Activated CD4-positive, alpha-beta memory T cell treated with anti-CD3 and anti-CD28 coated beads for 36 hours (primary cell): ENCODE measurements at regions of chrX and their contacts with region 1.

Region 1: GRCh38 chrX:64205735-64206491 is 405 bp upstream of the AMER1 start:
- DNase-seq: peak; percentile 92
- H3K4me3 Mint-ChIP-seq: peak overlapping the region; percentile 81
- H3K27ac Mint-ChIP-seq: peak overlapping the region; percentile 91
- H3K4me1 Mint-ChIP-seq: peaks cover 7% of the 10 kb centered on the region
- H3K27me3 Mint-ChIP-seq: no peaks in the 10 kb centered on the region

Region 2: DNA sequence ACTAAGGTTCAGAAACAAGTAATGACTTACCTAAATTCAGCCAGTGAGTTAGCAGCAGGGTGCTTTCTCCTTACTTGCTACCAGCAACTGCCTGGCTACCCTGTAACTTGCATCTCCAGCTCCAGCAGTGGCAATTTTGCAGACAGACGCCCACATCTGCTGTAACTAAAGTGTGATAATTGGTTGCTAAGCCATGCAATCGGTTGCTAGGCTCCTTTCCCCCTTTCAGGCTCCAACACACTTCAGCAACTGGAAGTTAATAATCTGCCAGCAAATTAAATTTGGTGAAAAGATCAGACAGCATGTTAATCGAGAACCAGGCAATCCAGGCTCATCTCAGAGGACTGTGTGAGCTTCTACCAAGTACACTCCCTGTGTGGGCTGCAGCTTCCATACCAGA is 396.7 kb before region 1 on chrX:
- CTCF ChIA-PET with region 1: no interaction called
- POLR2A ChIA-PET with region 1: no interaction called
- intact Hi-C with region 1: no loop called
- DNase-seq: no peak
- H3K4me3 Mint-ChIP-seq: no peak overlapping the region
- H3K27ac Mint-ChIP-seq: no peak overlapping the region
- H3K4me1 Mint-ChIP-seq: no peaks in the 10 kb centered on the region
- H3K27me3 Mint-ChIP-seq: peaks cover 1% of the 10 kb centered on the region

Region 3: DNA sequence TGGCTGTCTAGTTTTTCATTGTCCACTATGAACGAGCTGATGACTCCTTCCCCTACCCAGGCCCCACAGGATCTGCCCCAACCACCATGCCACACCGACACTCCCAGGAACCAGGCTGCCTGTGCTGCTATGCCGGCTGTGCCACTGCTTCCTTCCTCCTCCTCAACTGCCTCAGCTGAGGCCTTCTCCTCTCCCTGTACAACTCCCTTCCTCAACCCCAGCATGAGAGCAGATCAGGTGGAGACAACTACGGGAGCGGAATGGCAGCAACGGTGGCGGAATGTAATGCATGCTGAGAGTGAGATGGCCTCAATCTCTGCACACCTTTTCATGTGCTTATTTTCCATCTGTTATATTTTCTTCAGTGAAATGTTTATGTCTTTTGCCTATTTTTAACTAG is 100.8 kb after region 1 on chrX:
- CTCF ChIA-PET with region 1: no interaction called
- POLR2A ChIA-PET with region 1: no interaction called
- intact Hi-C with region 1: no loop called
- DNase-seq: no peak
- H3K4me3 Mint-ChIP-seq: no peak overlapping the region
- H3K27ac Mint-ChIP-seq: no peak overlapping the region
- H3K4me1 Mint-ChIP-seq: no peaks in the 10 kb centered on the region
- H3K27me3 Mint-ChIP-seq: no peaks in the 10 kb centered on the region

Region 4: GRCh38 chrX:64394874-64395567 is 189.1 kb after region 1 on chrX and contains the start of gene MTMR8:
- CTCF ChIA-PET with region 1: no interaction called
- POLR2A ChIA-PET with region 1: no interaction called
- intact Hi-C with region 1: loop called (anchors 1 kb)
- DNase-seq: peak; percentile 86
- H3K4me3 Mint-ChIP-seq: peak within 1 kb of the TSS; percentile 90
- H3K27ac Mint-ChIP-seq: peak within 1 kb of the TSS; percentile 81
- H3K4me1 Mint-ChIP-seq: peaks cover 22% of the 10 kb centered on the region
- H3K27me3 Mint-ChIP-seq: no peaks in the 10 kb centered on the region
- total RNA-seq, gene MTMR8: 5.0 to 5.8 TPM

Region 5: DNA sequence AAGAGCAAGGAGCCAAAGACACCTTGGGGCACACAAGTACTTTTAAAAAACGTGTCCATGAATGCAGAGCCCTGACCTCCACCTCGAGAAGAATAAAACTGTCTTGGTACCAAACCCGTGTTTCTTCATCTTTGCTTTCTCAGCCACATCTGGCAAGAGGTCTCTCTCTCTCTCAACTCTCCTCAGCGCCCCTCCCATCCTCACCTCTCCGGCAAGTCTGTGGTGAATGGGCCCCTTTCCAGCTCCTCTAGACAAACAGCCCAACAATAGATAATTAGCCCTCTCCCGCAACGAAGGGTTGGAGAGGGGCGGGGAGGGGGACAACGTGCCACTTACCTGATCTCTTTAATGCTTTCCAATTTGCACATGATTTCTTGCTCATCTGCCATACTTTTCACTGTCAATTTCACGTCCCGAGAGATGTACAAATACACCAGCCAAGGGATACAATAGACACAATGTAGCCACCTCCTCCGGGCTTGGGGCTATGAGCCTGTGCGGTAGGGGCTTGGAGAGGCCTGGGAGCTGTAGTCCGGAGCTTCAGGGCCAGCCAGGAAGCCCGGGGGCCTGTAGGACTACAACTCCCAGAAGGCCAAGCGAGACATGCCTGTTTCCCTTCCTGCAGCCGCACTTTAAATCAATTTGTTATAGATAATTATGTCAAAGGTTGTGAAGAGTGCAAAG is 770.2 kb after region 1 on chrX and contains the start of gene ZC4H2:
- CTCF ChIA-PET with region 1: no interaction called
- POLR2A ChIA-PET with region 1: no interaction called
- intact Hi-C with region 1: loop called (anchors 1 kb)
- DNase-seq: peak; percentile 79
- H3K4me3 Mint-ChIP-seq: peak within 1 kb of the TSS; percentile 79
- H3K27ac Mint-ChIP-seq: peak within 1 kb of the TSS; percentile 44
- H3K4me1 Mint-ChIP-seq: peaks cover 16% of the 10 kb centered on the region
- H3K27me3 Mint-ChIP-seq: no peaks in the 10 kb centered on the region
- total RNA-seq, gene ZC4H2: 8.9 to 9.1 TPM